Activated CD4-positive, alpha-beta T cell treated with anti-CD3 and anti-CD28 coated beads, Interleukin-2, amount 10 ng/mL, durations not matched to agents 7 days and 5 days (primary cell): ENCODE measurements at regions of chr5 and their contacts with region 1.

Region 1: DNA sequence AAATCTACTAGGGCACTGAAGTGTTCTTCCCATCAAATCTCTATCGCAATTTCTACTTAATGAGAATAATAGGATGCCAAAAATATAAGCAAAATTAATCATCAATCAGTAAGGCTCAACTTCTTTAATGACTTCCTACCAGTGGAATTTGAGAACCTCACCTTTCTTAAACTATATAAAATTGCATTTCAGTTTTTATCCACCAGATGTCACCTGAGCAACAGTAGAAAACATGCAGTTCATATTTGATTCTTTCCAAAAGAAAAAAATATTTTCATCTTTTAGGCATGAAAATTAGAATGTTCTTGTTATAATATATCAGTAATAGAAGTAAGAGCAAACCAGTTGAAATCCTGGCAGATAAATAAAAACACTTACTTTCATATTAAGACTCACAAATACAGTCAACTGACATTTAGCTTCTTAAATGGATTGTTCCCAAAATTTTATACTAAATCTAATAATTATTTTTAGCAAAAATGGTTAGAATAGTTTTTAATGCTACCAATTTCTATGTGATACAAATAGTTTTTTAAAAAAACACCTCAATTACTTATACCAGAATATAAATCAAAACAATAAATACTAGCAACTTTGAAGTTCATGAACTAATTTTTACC is 13.4 kb upstream of the CCDC112 start:
- DNase-seq: no peak
- H3K4me3 Mint-ChIP-seq: no peak overlapping the region
- H3K27ac Mint-ChIP-seq: no peak overlapping the region
- H3K4me1 Mint-ChIP-seq: no peaks in the 10 kb centered on the region
- H3K27me3 Mint-ChIP-seq: peaks cover 41% of the 10 kb centered on the region

Region 2: DNA sequence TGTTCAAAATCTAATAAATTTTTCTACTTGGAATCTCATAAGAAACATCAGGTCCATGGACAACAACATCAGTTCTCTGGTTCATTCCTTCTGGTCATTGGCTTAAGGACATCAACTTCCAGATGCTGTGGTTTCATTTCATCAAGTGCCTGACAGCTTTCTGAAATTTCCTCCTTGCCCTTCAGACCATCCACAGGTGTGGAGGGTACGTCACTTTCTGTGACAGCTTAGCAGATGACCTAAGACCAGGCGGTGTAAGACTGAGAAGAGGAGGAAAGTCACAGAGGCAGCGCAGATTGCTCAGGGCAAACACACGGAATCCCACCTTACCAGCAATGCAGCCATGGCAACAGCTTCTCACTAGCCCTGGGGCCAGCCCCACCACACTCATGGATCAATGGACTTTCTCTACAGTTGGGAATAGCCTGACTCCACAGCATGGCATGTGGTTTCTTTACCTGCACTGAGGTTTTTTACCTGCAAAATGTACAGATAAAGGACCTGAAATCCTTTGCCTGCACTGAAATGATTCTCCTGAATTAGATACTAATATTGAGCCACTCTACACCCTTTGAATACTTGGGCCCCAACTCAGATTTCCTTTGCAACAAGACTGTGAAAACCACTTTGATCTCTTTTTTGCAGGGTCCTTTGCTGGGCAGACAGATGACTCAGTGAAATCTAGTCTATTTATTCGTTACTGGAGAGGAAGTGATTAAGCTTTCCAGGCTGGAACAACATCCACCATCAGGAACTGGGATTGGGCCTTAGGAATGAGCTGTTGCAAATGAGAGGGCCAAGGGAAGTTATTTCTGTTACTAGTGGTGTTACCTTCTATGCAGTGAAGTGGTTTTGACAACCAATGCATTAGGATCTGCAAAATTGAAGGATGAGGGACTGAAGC is 265.6 kb after region 1 on chr5:
- CTCF ChIA-PET with region 1: interaction called, 10 read pairs
- POLR2A ChIA-PET with region 1: no interaction called
- DNase-seq: no peak
- H3K4me3 Mint-ChIP-seq: no peak overlapping the region
- H3K27ac Mint-ChIP-seq: no peak overlapping the region
- H3K4me1 Mint-ChIP-seq: peaks cover 3% of the 10 kb centered on the region
- H3K27me3 Mint-ChIP-seq: peaks cover 3% of the 10 kb centered on the region